Stomach (tissue), 19 donors: ENCODE measurements at regions of chrX and their contacts with region 1.

Region 1: GRCh38 chrX:69285881-69286564 is 120.8 kb upstream of the PJA1 start:
- DNase-seq: peak; percentile 67 to 87
- H3K4me3 ChIP-seq: peak overlapping the region; percentile 43 to 45 (median 44)
- H3K27ac ChIP-seq: peak overlapping the region in 3 of 5 donors; percentile 38 to 74 (median 48)
- H3K4me1 ChIP-seq: peaks cover 0 to 21% (median 18%) of the 10 kb centered on the region in 4 donors
- H3K27me3 ChIP-seq: peaks cover 0 to 31% (median 3%) of the 10 kb centered on the region in 3 donors
- CTCF ChIP-seq: peak in 5 of 7 experiments; percentile 38 to 84 (median 80)
- EP300 ChIP-seq: no peak
- POLR2A ChIP-seq: no peak

Region 2: DNA sequence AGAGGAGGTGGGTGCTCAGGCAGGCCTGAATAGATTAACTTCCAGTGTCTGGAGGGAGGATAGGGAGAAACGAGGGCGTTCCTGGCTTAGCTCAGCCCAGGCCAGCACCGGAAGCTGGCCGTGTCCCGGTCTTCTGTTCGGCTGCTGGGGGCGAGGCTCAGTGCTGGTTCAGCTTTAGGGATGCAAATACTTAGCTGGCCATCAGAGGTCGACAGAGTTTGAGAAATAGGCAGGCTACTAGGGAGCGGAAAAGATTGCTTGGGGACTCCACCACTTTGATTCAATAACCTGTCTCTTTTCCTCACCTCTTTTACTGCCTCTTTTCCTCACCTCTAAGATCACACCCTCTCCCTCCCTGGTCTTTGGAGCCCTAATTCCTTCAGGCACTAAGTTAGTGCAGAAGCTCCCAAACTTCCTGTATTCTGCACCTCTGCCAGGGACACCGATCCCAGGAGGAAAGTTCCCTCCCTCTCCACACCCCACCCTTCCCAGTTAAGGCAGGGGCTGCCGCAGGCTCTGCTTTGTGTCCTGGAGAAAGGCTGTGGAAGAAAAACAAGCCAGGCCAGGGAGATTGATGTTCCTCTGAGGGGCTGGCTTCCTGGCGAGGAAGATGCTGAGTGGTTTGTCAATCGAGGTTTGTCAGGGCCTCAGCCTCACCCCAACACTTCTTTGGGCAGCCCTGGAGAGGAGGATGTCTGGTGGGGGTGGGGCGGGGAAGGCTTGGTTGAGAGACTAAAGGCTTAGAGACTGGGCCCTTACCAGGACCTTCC is 463.2 kb before region 1 on chrX:
- intact Hi-C with region 1: loop called (anchors 5 kb)
- DNase-seq: peak in 1 of 2 donors; percentile 83
- H3K4me3 ChIP-seq: no peak overlapping the region
- H3K27ac ChIP-seq: no peak overlapping the region
- H3K4me1 ChIP-seq: peaks cover 0 to 10% (median 3%) of the 10 kb centered on the region in 4 donors
- H3K27me3 ChIP-seq: peaks cover 0 to 14% (median 0%) of the 10 kb centered on the region in 3 donors
- CTCF ChIP-seq: peak in 4 of 7 experiments; percentile 31 to 46 (median 42)
- EP300 ChIP-seq: no peak
- POLR2A ChIP-seq: no peak

Region 3: DNA sequence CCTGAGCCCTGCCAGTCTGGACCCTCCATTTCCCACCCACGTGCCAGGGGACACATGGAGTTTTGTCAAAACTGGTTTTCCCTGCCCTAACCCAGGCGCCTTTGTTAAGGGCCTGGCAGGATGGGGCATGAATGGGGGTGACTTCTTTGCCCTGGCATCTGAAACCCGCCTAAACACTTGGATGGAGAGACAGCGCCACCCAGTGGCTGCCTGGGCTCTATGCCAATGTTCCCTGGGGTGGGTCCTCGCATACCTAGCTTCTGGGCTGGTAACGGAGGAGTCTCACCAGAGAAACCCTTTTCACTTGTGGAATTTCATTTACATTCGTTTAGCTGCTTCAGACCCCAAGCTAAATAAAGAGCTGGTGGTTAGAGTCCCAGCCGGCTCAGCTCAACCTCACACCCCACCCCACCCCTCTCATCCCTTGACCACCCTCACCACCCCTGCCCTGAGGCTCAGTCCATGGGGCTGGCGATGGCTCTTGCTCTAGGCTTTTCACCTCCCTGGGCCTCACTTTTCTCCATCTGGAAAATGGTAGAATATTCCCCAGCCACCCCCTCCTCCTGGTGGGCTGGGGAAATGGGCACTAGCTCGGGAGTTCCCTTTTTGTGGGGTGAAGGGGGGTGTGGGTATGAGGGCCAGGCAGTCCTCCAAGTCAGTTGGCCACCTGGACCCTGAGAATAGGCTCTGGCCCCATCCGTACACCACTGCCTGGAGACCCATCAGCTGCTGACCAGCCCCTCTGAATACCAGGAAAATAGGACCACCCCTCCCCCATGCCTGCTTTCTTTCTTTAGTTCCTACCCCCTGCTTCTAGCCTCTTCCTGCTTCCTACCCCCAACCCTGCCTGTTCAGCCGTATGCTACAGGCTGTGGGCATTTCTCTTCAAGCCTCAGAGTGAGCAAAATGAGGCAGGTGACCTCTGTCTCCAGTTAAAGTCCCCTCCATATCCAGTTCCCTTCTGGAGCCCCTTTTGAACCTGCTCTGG is 63.6 kb before region 1 on chrX:
- intact Hi-C with region 1: no loop called
- DNase-seq: peak; percentile 68 to 88
- H3K4me3 ChIP-seq: no peak overlapping the region
- H3K27ac ChIP-seq: no peak overlapping the region
- H3K4me1 ChIP-seq: peaks cover 0 to 12% (median 0%) of the 10 kb centered on the region in 4 donors
- H3K27me3 ChIP-seq: peaks cover 0 to 22% (median 0%) of the 10 kb centered on the region in 3 donors
- CTCF ChIP-seq: peak in 5 of 7 experiments; percentile 42 to 75 (median 54)
- EP300 ChIP-seq: no peak
- POLR2A ChIP-seq: no peak